ENCODE measurements at regions of chr11 and their contacts with region 1.

Region 1: DNA sequence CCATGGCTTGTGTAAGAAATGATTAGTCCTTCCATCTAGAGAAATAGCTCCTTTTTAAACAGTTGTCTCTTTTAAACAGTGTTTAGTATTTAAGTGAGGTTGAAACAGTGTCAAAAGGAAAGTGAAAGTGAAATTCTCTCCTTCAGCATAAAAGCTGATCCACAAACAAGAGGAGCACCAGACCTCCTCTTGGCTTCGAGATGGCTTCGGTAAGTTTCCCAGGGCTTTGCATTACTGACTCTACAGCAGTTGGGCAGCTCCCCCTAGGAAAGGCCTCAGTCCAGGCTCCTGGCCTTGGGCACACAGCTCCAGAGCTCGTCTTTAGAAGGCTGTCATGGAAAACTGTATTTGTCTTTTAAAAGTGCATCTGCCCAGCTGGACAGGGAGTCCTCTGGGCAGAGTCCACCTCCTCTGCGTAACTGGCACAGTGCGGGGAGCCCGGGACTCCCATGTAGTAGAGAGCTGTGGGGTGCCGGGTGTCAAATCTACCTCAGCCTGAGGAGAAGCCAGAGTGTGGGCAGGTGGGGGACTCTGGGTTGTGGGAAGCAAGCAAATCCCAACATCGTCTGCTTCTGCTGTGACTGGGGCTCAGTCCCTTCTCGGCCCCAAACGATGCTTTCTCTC is at the start of gene PLAAT4:
- DNase-seq: peak; percentile 88
- H3K4me3 Mint-ChIP-seq: peak within 1 kb of the TSS; percentile 90
- H3K27ac Mint-ChIP-seq: peak within 1 kb of the TSS; percentile 88
- H3K4me1 Mint-ChIP-seq: peaks cover 66% of the 10 kb centered on the region
- H3K27me3 Mint-ChIP-seq: no peaks in the 10 kb centered on the region
- total RNA-seq, gene PLAAT4: 12.2 and 14.7 TPM in 2 replicates

Region 2: GRCh38 chr11:63573881-63574855 is 37.4 kb after region 1 on chr11:
- intact Hi-C with region 1: no loop called
- DNase-seq: peak; percentile 85
- H3K4me3 Mint-ChIP-seq: peak overlapping the region; percentile 73
- H3K27ac Mint-ChIP-seq: peak overlapping the region; percentile 71
- H3K4me1 Mint-ChIP-seq: peaks cover 23% of the 10 kb centered on the region
- H3K27me3 Mint-ChIP-seq: peaks cover 13% of the 10 kb centered on the region

Region 3: DNA sequence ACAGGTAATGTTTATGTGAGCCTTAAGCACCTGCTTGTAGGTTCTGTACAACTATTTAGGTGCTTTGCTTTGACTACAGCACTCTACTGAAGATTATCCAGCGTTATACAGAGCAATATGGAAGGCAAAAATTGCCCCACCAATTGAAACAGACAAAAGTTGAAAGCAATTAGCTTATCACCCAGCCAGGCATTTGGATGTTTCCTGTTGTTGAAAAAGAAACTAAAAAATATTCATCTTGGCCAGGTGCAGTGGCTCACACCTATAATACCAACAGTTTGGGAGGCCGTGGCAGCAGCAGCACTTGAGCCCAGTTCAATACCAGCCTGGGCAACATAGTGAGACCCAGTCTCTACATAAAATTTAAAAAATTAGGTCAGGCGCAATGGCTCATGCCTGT is 115.9 kb after region 1 on chr11:
- intact Hi-C with region 1: no loop called
- DNase-seq: no peak
- H3K4me3 Mint-ChIP-seq: no peak overlapping the region
- H3K27ac Mint-ChIP-seq: no peak overlapping the region
- H3K4me1 Mint-ChIP-seq: peaks cover 6% of the 10 kb centered on the region
- H3K27me3 Mint-ChIP-seq: no peaks in the 10 kb centered on the region

Region 4: GRCh38 chr11:63671322-63672155 is 134.8 kb after region 1 on chr11 and contains the start of gene ATL3:
- intact Hi-C with region 1: loop called (anchors 5 kb)
- DNase-seq: peak; percentile 98
- H3K4me3 Mint-ChIP-seq: peak within 1 kb of the TSS; percentile 82
- H3K27ac Mint-ChIP-seq: peak within 1 kb of the TSS; percentile 88
- H3K4me1 Mint-ChIP-seq: peaks cover 27% of the 10 kb centered on the region
- H3K27me3 Mint-ChIP-seq: no peaks in the 10 kb centered on the region
- total RNA-seq, gene ATL3: 38.5 and 39.5 TPM in 2 replicates

Measured in activated CD4-positive, alpha-beta T cell treated with anti-CD3 and anti-CD28 coated beads, Interleukin-2, amount 10 ng/mL, durations not matched to agents 24 days and 14 days (primary cell).